ENCODE measurements at regions of chr1 and their contacts with region 1.

Region 1: DNA sequence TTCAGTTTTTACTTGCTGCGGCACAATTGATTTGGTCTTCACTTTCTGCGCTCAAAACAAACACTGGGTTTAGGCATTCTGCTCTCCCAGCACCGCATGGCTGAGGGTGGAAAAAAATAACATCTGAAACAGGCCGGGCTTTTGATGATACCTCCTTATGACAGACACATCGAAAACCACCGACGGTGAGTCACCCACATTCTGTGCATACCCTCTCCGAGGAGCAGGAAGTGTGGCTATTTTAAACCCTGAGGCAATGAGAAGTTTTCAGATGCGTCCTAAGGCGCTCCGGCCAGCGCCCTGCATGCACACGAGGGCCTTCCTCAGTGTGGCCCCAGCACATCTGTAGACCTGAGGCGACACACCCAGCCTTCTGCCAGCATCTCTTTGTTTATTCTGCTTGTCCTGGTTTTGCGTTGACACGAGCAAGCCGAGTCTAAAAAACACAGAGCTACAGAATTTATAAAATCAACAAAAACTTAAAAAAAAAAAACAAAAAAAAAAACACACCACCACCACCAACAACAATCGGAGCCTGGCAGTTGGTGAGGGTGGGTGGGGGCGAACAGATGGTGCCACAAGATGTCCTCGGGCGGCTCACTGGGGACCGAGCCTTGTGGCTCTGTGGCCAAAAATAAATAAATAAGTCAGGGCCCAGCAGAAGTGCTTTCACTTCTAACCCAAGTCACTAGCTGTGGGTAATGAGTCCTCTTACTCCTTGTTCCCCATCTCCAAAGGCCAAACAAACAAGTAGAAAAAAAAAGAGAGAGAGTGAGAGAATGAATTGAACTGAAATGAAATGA is 162.6 kb upstream of the IRF2BP2 start:
- DNase-seq: peak; percentile 97
- ATAC-seq: peak; percentile 92
- H3K4me3 ChIP-seq: peak overlapping the region; percentile 13; the same call in 1 of the 2 replicates
- H3K27ac ChIP-seq: peak overlapping the region; percentile 89
- H3K4me1 ChIP-seq: peaks cover 37% of the 10 kb centered on the region
- H3K27me3 ChIP-seq: peaks cover 6 to 11% of the 10 kb centered on the region in 2 experiments; a peak in 3 of 4 replicates
- CTCF ChIP-seq: no peak
- EP300 ChIP-seq: peak; percentile 88 to 93; a peak in 3 of 4 replicates
- POLR2A ChIP-seq: peak; percentile 77
- RAD21 ChIP-seq: 0 out of 2 replicates have a peak, but pooled peaks have one; percentile 13

Region 2: GRCh38 chr1:234230414-234230862 is 542.1 kb before region 1 on chr1:
- CTCF ChIA-PET with region 1: no interaction called
- POLR2A ChIA-PET with region 1: no interaction called
- RAD21 ChIA-PET with region 1: no interaction called
- SMC1A ChIA-PET with region 1: no interaction called
- in situ Hi-C with region 1: no loop called
- intact Hi-C with region 1: no loop called
- DNase-seq: no peak
- ATAC-seq: peak; percentile 60
- H3K4me3 ChIP-seq: 0 out of 2 replicates have a peak overlapping the region, but pooled peaks have one; percentile 25
- H3K27ac ChIP-seq: no peak overlapping the region
- H3K4me1 ChIP-seq: peaks cover 7% of the 10 kb centered on the region
- H3K27me3 ChIP-seq: no peaks in the 10 kb centered on the region
- CTCF ChIP-seq: no peak
- EP300 ChIP-seq: no peak; a peak in 1 of 4 replicates
- POLR2A ChIP-seq: no peak
- RAD21 ChIP-seq: no peak

Region 3: DNA sequence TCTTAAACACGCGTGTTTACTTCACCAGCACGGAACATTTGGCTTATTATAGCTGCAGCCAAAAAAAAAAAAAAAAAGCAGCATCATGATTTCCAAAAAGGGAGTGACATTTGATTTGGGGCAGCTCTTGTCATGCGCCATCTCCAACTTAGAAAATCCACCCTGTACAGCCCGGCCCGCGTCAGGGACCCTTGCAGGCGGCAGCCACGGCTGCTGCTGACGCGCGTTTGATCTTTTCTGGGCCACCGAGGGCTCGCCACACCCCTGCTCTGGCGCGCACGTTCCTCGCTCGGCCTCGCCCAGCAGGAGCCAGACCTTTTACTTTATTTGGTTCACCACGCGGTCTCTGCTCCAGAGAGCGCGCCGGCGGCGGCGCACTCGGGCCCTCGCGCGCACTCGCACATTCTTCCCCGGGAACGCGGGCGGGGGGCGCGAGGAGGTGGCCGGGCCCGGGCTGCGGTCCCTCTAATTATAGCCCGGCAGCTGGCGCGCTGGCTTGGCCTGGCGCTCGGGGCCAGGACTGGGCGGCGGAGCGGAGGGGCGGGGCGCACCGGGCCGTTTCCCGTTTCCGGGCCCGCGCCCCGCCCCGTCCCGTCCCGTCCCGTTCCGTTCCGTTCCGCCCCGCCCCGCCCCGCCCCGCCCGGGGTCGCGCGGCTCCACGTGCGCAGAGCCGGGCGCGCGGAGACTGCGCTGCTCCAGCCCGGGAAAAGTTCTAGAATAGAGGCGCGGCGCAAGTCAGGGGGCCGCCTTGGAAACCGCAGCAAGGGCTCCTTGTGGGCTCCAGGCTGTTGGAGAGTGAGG is 172.7 kb before region 1 on chr1:
- CTCF ChIA-PET with region 1: interaction called, 4 read pairs
- POLR2A ChIA-PET with region 1: interaction called, 8 read pairs
- RAD21 ChIA-PET with region 1: interaction called, 16 read pairs
- SMC1A ChIA-PET with region 1: interaction called, 11 read pairs
- in situ Hi-C with region 1: no loop called
- intact Hi-C with region 1: no loop called
- DNase-seq: no peak
- ATAC-seq: peak; percentile 76
- H3K4me3 ChIP-seq: peak overlapping the region; percentile 67; the same call in 1 of the 2 replicates
- H3K27ac ChIP-seq: peak overlapping the region; percentile 75
- H3K4me1 ChIP-seq: peaks cover 22% of the 10 kb centered on the region
- H3K27me3 ChIP-seq: no peaks in the 10 kb centered on the region
- CTCF ChIP-seq: 0 out of 6 replicates have a peak, but pooled peaks of 1 of the 3 experiments have one; percentile 5
- EP300 ChIP-seq: 0 out of 4 replicates have a peak, but pooled peaks of 1 of the 2 experiments have one; percentile 42
- POLR2A ChIP-seq: peak; percentile 70; the same call in 1 of the 2 replicates
- RAD21 ChIP-seq: no peak

Region 4: DNA sequence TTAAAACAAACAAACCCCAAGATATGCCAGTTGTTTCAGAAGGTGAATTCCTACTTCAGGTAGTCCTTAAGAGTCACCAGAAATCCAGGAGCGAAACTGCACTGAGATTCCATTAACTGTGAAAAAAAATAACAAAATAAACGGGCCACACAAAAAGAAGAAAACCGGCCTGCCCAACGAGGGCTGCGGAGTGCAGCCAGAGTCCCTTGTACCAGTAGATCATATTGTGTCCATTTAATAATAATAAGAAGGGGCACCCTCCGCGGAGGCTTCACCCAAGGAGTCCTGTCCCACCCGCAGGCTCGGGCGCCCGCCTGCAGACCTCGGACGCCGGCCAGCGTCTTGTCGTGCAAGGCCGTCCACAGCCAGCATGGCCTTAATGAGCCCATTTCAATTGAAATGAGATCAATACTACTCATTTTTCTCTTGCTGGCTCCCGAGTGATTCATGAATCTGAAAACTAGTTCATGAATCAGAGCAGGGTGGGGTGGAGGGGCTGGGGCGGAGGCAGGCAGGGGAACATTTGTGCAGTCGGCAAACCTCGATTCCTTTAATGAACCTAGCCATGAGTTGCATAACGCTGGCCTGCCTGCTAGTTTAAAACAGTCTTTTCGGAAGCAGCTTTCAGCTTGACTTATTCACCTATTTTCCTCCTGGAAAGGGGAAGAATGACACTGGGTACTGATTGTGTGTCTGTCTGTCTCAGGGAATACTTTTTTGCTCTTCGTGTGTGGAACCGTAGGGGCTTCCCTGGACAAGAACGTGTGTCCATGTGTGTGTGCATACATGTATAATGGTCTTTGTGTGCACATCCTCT is 49.4 kb before region 1 on chr1:
- CTCF ChIA-PET with region 1: interaction called, 11 read pairs
- POLR2A ChIA-PET with region 1: interaction called, 16 read pairs
- RAD21 ChIA-PET with region 1: interaction called, 58 read pairs
- SMC1A ChIA-PET with region 1: interaction called, 43 read pairs
- in situ Hi-C with region 1: no loop called
- intact Hi-C with region 1: no loop called
- DNase-seq: no peak
- ATAC-seq: no peak
- H3K4me3 ChIP-seq: no peak overlapping the region
- H3K27ac ChIP-seq: peak overlapping the region; percentile 94
- H3K4me1 ChIP-seq: peaks cover 49% of the 10 kb centered on the region
- H3K27me3 ChIP-seq: no peaks in the 10 kb centered on the region
- CTCF ChIP-seq: no peak
- EP300 ChIP-seq: no peak
- POLR2A ChIP-seq: no peak
- RAD21 ChIP-seq: no peak

Region 5: DNA sequence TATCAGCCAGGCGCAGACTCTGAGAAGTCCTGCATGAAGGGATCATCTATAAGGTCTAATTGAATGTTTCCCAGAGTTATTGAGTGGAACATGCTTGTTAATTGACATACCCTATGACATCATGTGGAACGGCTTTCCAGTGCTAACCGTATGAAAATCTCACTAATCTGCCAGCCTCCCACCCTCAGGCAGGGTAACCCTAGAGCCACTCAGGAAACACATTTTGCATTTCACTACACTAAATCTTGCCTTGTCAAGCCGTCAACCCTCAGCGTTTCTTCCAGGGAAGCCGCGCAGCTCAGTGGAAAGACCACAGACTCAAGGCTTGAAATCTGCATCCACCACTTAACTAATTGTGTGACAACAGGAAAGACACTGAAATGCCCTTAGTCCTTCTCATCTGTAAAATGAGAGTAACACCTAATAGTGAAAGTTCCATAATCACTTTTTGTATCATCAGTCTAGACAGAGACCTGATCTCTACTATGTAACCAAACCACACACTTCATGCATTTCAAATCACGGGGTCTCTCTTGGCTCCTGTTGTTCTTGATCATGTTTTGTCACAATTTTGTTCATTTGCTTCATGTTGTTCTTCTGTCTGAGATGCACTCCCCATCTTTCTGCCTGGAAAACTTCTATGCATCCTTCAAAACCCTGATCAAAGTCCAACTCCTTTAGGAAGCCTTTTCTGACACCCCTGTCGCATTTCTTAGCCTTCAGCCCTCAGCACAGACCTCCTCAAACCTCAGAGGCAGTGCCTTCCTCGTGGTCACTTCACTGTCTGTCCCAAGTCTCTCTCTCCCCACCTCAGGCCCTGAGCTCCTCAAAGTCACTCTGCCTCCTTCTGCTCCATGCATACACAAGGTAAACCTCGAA is 109.6 kb after region 1 on chr1:
- CTCF ChIA-PET with region 1: no interaction called
- POLR2A ChIA-PET with region 1: interaction called, 5 read pairs
- RAD21 ChIA-PET with region 1: interaction called, 24 read pairs
- SMC1A ChIA-PET with region 1: interaction called, 7 read pairs
- in situ Hi-C with region 1: no loop called
- intact Hi-C with region 1: loop called (anchors 2 kb)
- DNase-seq: peak; percentile 83
- ATAC-seq: peak; percentile 88
- H3K4me3 ChIP-seq: peak overlapping the region; percentile 53
- H3K27ac ChIP-seq: peak overlapping the region; percentile 73
- H3K4me1 ChIP-seq: peaks cover 50% of the 10 kb centered on the region
- H3K27me3 ChIP-seq: no peaks in the 10 kb centered on the region
- CTCF ChIP-seq: no peak
- EP300 ChIP-seq: peak; percentile 90 to 94
- POLR2A ChIP-seq: no peak
- RAD21 ChIP-seq: no peak

Region 6: DNA sequence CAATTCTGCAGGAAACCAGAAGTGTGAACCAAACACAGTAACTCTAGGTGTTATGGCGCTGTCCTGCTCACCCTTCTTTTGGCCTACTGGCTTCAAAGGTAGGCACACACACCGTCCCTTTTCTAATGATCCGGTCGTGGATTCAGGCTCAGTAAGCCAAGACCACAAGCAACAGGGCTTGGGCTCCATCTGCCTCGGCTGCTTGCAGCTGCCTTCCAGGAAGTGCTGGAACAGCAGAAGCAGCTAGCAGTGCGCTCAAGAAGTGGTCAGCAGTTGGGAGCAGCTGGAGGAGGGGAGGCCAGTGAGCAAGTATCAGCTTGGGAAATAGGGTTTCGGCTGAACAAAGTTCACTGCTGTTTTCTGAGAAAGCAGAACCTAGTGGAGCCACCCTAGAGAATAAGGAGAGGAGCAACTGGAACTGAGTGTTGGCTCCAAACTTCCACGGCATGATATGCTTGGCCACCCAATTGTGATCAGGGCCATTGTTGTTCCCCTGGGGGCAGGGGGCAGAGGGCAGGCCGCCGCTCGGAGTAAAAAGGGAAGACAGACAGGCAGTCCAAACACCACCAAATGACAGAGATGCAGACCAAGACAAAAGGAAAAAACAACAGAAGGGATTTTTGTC is 182.7 kb after region 1 on chr1:
- CTCF ChIA-PET with region 1: no interaction called
- POLR2A ChIA-PET with region 1: interaction called, 6 read pairs
- RAD21 ChIA-PET with region 1: interaction called, 5 read pairs
- SMC1A ChIA-PET with region 1: interaction called, 3 read pairs
- in situ Hi-C with region 1: no loop called
- intact Hi-C with region 1: loop called (anchors 2 kb)
- DNase-seq: no peak
- ATAC-seq: peak; percentile 63
- H3K4me3 ChIP-seq: no peak overlapping the region; the same call in 1 of the 2 replicates
- H3K27ac ChIP-seq: peak overlapping the region; percentile 93
- H3K4me1 ChIP-seq: peaks cover 48% of the 10 kb centered on the region
- H3K27me3 ChIP-seq: no peaks in the 10 kb centered on the region
- CTCF ChIP-seq: no peak
- EP300 ChIP-seq: peak in 1 of 2 experiments; percentile 33; a peak in 1 of 4 replicates
- POLR2A ChIP-seq: 0 out of 2 replicates have a peak, but pooled peaks have one; percentile 43
- RAD21 ChIP-seq: no peak

Region 7: GRCh38 chr1:234978397-234979295 is 206.1 kb after region 1 on chr1:
- CTCF ChIA-PET with region 1: no interaction called
- POLR2A ChIA-PET with region 1: interaction called, 7 read pairs
- RAD21 ChIA-PET with region 1: interaction called, 28 read pairs
- SMC1A ChIA-PET with region 1: interaction called, 9 read pairs
- in situ Hi-C with region 1: no loop called
- intact Hi-C with region 1: loop called (anchors 1 kb)
- DNase-seq: peak; percentile 94
- ATAC-seq: peak; percentile 66
- H3K4me3 ChIP-seq: peak overlapping the region; percentile 29
- H3K27ac ChIP-seq: peak overlapping the region; percentile 98
- H3K4me1 ChIP-seq: peaks cover 76% of the 10 kb centered on the region
- H3K27me3 ChIP-seq: no peaks in the 10 kb centered on the region
- CTCF ChIP-seq: peak in 2 of 3 experiments; percentile 13 to 16; a peak in 2 of 6 replicates
- EP300 ChIP-seq: peak; percentile 96 to 99
- POLR2A ChIP-seq: 0 out of 2 replicates have a peak, but pooled peaks have one; percentile 56
- RAD21 ChIP-seq: peak; percentile 44

Region 8: GRCh38 chr1:235190431-235190830 is 417.9 kb after region 1 on chr1:
- CTCF ChIA-PET with region 1: no interaction called
- POLR2A ChIA-PET with region 1: no interaction called
- RAD21 ChIA-PET with region 1: no interaction called
- SMC1A ChIA-PET with region 1: no interaction called
- in situ Hi-C with region 1: no loop called
- intact Hi-C with region 1: no loop called
- DNase-seq: no peak
- ATAC-seq: no peak
- H3K4me3 ChIP-seq: no peak overlapping the region
- H3K27ac ChIP-seq: no peak overlapping the region
- H3K4me1 ChIP-seq: no peaks in the 10 kb centered on the region
- H3K27me3 ChIP-seq: no peaks in the 10 kb centered on the region
- CTCF ChIP-seq: no peak
- EP300 ChIP-seq: no peak
- POLR2A ChIP-seq: no peak
- RAD21 ChIP-seq: no peak